ENCODE measurements at regions of chr5 and their contacts with region 1.

Region 1: GRCh38 chr5:143314659-143315058 is 88.8 kb downstream of the NR3C1 start:
- DNase-seq: no peak
- ATAC-seq: peak; percentile 43 to 63 (median 52)
- H3K4me3 ChIP-seq: no peak overlapping the region
- H3K27ac ChIP-seq: peak overlapping the region; percentile 86
- H3K4me1 ChIP-seq: peaks cover 68% of the 10 kb centered on the region
- H3K27me3 ChIP-seq: no peaks in the 10 kb centered on the region
- CTCF ChIP-seq: no peak

Region 2: GRCh38 chr5:142529626-142530278 is 784.9 kb before region 1 on chr5:
- intact Hi-C with region 1: no loop called
- DNase-seq: no peak
- ATAC-seq: no peak
- H3K4me3 ChIP-seq: no peak overlapping the region
- H3K27ac ChIP-seq: no peak overlapping the region
- H3K4me1 ChIP-seq: no peaks in the 10 kb centered on the region
- H3K27me3 ChIP-seq: no peaks in the 10 kb centered on the region
- CTCF ChIP-seq: no peak

Region 3: GRCh38 chr5:143244000-143244736 is 70.5 kb before region 1 on chr5:
- intact Hi-C with region 1: loop called in 1 of 2 experiments (anchors 5 kb)
- DNase-seq: peak; percentile 75 to 85
- ATAC-seq: peak; percentile 83 to 85 (median 84)
- H3K4me3 ChIP-seq: peak overlapping the region; percentile 37
- H3K27ac ChIP-seq: peak overlapping the region; percentile 87
- H3K4me1 ChIP-seq: peaks cover 52% of the 10 kb centered on the region
- H3K27me3 ChIP-seq: no peaks in the 10 kb centered on the region
- CTCF ChIP-seq: no peak

Region 4: GRCh38 chr5:143376911-143377813 is 62.5 kb after region 1 on chr5:
- intact Hi-C with region 1: loop called in 1 of 2 experiments (anchors 10 kb)
- DNase-seq: no peak
- ATAC-seq: peak; percentile 72 to 83 (median 78)
- H3K4me3 ChIP-seq: no peak overlapping the region
- H3K27ac ChIP-seq: peak overlapping the region; percentile 65
- H3K4me1 ChIP-seq: peaks cover 78% of the 10 kb centered on the region
- H3K27me3 ChIP-seq: no peaks in the 10 kb centered on the region
- CTCF ChIP-seq: no peak